Naive thymus-derived CD4-positive, alpha-beta T cell (primary cell): ENCODE measurements at regions of chr2 and their contacts with region 1.

Region 1: DNA sequence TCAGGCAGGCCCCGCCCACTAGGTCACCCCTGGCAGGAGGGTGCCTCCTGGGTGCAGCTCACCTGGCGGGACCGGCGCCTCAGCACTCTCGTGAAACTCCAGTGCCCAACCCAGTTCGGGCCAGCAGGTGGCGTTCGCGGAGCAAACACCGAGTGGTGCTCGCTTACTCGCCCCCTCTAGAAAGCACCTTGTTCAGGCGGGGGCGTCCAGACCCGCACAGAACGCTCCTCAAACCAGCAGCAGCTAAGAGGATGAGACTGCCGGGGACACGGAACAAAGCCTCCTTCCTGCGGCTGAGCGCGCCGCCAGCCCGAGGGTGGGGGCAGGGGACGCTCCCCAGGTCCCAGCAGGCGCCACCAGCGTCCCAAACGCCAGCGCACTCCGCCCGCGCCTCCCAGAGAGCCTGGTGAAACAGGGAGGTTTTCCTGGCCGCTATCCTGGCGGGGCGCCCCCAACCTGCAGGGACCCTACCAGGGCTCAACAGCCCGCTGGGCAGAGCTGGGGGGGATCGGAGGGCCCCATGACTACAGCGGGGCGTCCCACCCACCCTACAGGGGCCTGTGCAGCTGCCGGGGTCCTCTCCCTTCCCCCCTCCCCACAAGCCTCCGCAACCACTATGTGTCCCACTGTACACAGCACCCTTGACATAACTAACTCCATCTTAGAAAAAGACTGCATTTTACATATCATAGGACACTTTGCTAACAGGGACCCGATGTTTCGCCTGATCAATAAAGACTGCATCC is 44.7 kb downstream of the MRPS5 start:
- DNase-seq: peak; percentile 77 to 92 (median 89)
- ATAC-seq: peak; percentile 87
- H3K4me3 ChIP-seq: peak overlapping the region; percentile 90
- H3K4me3 Mint-ChIP-seq: peak overlapping the region; percentile 85 to 97 (median 93)
- H3K27ac ChIP-seq: peak overlapping the region; percentile 80
- H3K27ac Mint-ChIP-seq: peak overlapping the region; percentile 96 to 99 (median 98)
- H3K4me1 ChIP-seq: peaks cover 22 to 73% of the 10 kb centered on the region in 2 donors
- H3K4me1 Mint-ChIP-seq: peaks cover 28 to 83% (median 77%) of the 10 kb centered on the region in 7 donors
- H3K27me3 ChIP-seq: no peaks in the 10 kb centered on the region
- H3K27me3 Mint-ChIP-seq: no peaks in the 10 kb centered on the region

Region 2: DNA sequence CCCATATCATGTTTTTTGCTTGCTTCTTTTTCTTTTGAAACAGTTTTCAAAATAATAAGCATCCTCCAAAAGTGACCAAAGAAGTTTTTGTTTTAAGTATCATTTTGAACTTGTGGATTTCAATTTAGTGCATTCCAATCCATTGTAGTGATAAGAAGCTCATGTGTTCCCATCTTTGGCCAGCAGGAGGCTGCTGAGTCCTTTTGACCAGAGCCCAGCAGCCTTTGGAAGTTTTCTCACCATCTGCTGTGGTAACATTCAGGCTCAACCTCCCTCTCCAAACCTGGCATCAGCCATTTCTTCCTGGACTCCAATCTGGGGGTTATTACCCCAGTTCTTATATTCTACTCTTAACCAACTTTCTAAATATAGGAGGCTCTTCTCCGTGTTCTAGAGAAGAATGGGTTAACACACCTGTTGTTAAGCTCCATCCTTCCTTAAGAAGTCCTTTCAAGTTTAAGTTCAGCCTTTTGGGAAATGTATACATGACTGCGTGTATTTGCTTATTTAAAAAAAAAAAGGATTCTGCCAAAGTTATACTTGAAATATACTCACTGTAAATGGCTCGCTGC is 90.5 kb before region 1 on chr2:
- CTCF ChIA-PET with region 1: interaction called, 3 read pairs
- POLR2A ChIA-PET with region 1: interaction called, 6 read pairs
- intact Hi-C with region 1: loop called (anchors 1 kb)
- DNase-seq: peak in 6 of 9 donors; percentile 20 to 50 (median 28)
- ATAC-seq: no peak
- H3K4me3 ChIP-seq: no peak overlapping the region
- H3K4me3 Mint-ChIP-seq: no peak overlapping the region
- H3K27ac ChIP-seq: no peak overlapping the region
- H3K27ac Mint-ChIP-seq: no peak overlapping the region
- H3K4me1 ChIP-seq: no peaks in the 10 kb centered on the region
- H3K4me1 Mint-ChIP-seq: peaks cover 0 to 6% (median 0%) of the 10 kb centered on the region in 7 donors
- H3K27me3 ChIP-seq: no peaks in the 10 kb centered on the region
- H3K27me3 Mint-ChIP-seq: peaks cover 11 to 26% (median 20%) of the 10 kb centered on the region in 5 donors

Region 3: DNA sequence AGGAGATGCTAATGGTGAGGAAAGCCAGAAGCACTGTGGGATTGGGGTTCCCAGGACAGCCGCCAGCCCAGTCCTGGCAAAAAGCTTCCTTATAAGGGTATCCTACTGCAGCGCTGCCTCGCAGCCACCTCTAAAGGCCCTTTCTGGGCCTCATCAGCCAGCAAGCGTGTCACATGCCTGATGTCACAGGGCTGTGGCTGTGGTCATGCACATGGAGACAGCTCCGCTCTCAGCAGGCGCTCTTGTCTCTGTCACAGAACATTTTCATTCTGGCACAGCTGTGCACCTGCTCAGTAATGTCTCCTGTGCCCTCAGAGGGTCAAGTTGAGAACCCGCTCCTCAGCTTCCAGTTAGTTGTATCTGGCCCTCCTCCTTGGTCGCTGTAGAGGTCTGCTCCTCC is 69.1 kb before region 1 on chr2:
- CTCF ChIA-PET with region 1: no interaction called
- POLR2A ChIA-PET with region 1: no interaction called
- intact Hi-C with region 1: no loop called
- DNase-seq: no peak
- ATAC-seq: no peak
- H3K4me3 ChIP-seq: no peak overlapping the region
- H3K4me3 Mint-ChIP-seq: no peak overlapping the region
- H3K27ac ChIP-seq: no peak overlapping the region
- H3K27ac Mint-ChIP-seq: peak overlapping the region in 1 of 9 donors; percentile 36
- H3K4me1 ChIP-seq: no peaks in the 10 kb centered on the region
- H3K4me1 Mint-ChIP-seq: peaks cover 0 to 4% (median 0%) of the 10 kb centered on the region in 7 donors
- H3K27me3 ChIP-seq: no peaks in the 10 kb centered on the region
- H3K27me3 Mint-ChIP-seq: peaks cover under 1 to 10% (median 6%) of the 10 kb centered on the region in 5 donors

Region 4: GRCh38 chr2:95043300-95044093 is 33.5 kb before region 1 on chr2:
- CTCF ChIA-PET with region 1: interaction called, 12 read pairs
- POLR2A ChIA-PET with region 1: interaction called, 581 read pairs
- intact Hi-C with region 1: loop called in 1 of 2 experiments (anchors 5 kb)
- DNase-seq: peak in 3 of 9 donors; percentile 35 to 45 (median 39)
- ATAC-seq: peak; percentile 37
- H3K4me3 ChIP-seq: no peak overlapping the region
- H3K4me3 Mint-ChIP-seq: peak overlapping the region in 7 of 10 donors; percentile 9 to 68 (median 41)
- H3K27ac ChIP-seq: peak overlapping the region; percentile 49
- H3K27ac Mint-ChIP-seq: peak overlapping the region; percentile 49 to 98 (median 67)
- H3K4me1 ChIP-seq: peaks cover 0 to 62% of the 10 kb centered on the region in 2 donors
- H3K4me1 Mint-ChIP-seq: peaks cover 26 to 99% (median 86%) of the 10 kb centered on the region in 7 donors
- H3K27me3 ChIP-seq: no peaks in the 10 kb centered on the region
- H3K27me3 Mint-ChIP-seq: no peaks in the 10 kb centered on the region

Region 5: GRCh38 chr2:95062242-95063085 is 14.5 kb before region 1 on chr2:
- CTCF ChIA-PET with region 1: interaction called, 163 read pairs
- POLR2A ChIA-PET with region 1: interaction called, 581 read pairs
- intact Hi-C with region 1: loop called (anchors 1 kb)
- DNase-seq: no peak
- ATAC-seq: no peak
- H3K4me3 ChIP-seq: peak overlapping the region; percentile 8
- H3K4me3 Mint-ChIP-seq: peak overlapping the region; percentile 42 to 81 (median 78)
- H3K27ac ChIP-seq: peak overlapping the region; percentile 68
- H3K27ac Mint-ChIP-seq: peak overlapping the region; percentile 84 to 95 (median 90)
- H3K4me1 ChIP-seq: peaks cover 0 to 24% of the 10 kb centered on the region in 2 donors
- H3K4me1 Mint-ChIP-seq: peaks cover 24 to 58% (median 50%) of the 10 kb centered on the region in 7 donors
- H3K27me3 ChIP-seq: no peaks in the 10 kb centered on the region
- H3K27me3 Mint-ChIP-seq: no peaks in the 10 kb centered on the region

Region 6: GRCh38 chr2:95121407-95122196 is 44.6 kb after region 1 on chr2 and contains the start of gene MRPS5:
- CTCF ChIA-PET with region 1: interaction called, 82 read pairs
- POLR2A ChIA-PET with region 1: interaction called, 23 read pairs
- intact Hi-C with region 1: loop called (anchors 1 kb)
- DNase-seq: peak; percentile 63 to 95 (median 72)
- ATAC-seq: peak; percentile 98
- H3K4me3 ChIP-seq: peak within 1 kb of the TSS; percentile 74
- H3K4me3 Mint-ChIP-seq: peak within 1 kb of the TSS; percentile 91 to 99 (median 96)
- H3K27ac ChIP-seq: peak within 1 kb of the TSS; percentile 91
- H3K27ac Mint-ChIP-seq: peak within 1 kb of the TSS; percentile 92 to 97 (median 94)
- H3K4me1 ChIP-seq: peaks cover 19 to 27% of the 10 kb centered on the region in 2 donors
- H3K4me1 Mint-ChIP-seq: peaks cover 38 to 58% (median 52%) of the 10 kb centered on the region in 7 donors
- H3K27me3 ChIP-seq: no peaks in the 10 kb centered on the region
- H3K27me3 Mint-ChIP-seq: no peaks in the 10 kb centered on the region
- total RNA-seq, gene MRPS5: 26.3 to 72.9 (median 60.5) TPM

Region 7: DNA sequence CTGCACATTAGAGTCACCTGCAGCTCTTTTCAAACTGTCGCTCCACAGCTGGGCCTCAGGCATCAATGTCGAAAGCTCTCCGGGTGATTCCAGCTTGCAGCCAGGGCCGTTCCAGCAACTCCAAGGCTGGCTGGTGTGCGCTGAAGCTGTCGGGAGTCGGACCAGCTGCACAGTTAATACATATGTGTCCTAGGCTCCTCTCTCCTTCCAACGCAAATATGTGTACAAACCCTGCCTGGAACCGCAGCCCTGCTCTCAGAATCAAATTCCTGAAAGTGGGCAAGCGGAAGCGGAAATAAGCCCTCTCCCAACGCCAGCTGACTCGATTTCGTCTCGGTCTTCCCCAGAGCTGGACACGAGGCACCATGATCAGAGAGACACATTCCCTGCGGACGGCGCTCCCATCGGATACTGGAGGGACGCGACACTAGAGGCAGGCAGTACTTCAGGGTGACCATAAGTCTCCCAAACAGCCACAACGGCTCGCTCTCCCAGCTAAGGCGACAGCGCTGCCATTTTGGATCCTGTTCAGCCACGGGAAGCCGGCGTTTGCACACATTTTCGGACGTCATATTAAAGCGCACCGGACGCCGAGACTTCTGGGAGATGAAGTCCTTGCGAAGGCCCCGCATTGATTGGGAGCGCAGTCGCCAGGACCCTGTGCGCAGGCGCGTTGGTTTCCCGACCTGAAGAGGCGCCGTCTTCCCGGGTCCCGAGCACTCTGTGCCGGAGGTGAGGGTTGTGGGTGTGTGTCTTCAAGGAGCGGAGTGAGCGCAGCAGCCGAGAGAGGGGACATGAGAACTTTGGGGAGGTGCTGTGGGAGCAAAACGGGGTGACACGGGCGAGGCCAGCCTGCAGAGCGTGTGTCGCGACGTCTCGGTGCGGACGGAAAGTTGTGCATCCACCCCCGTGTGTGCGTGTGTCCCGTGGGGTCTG is 88.4 kb after region 1 on chr2 and contains the start of gene ZNF2:
- CTCF ChIA-PET with region 1: no interaction called
- POLR2A ChIA-PET with region 1: interaction called, 23 read pairs
- intact Hi-C with region 1: loop called (anchors 1 kb)
- DNase-seq: peak; percentile 92 to 98 (median 96)
- ATAC-seq: peak; percentile 97
- H3K4me3 ChIP-seq: peak within 1 kb of the TSS; percentile 91
- H3K4me3 Mint-ChIP-seq: peak within 1 kb of the TSS; percentile 97 to 100 (median 99)
- H3K27ac ChIP-seq: peak within 1 kb of the TSS; percentile 82
- H3K27ac Mint-ChIP-seq: peak within 1 kb of the TSS; percentile 91 to 99 (median 96)
- H3K4me1 ChIP-seq: peaks cover 4 to 13% of the 10 kb centered on the region in 2 donors
- H3K4me1 Mint-ChIP-seq: peaks cover 23 to 54% (median 42%) of the 10 kb centered on the region in 7 donors
- H3K27me3 ChIP-seq: no peaks in the 10 kb centered on the region
- H3K27me3 Mint-ChIP-seq: no peaks in the 10 kb centered on the region
- total RNA-seq, gene ZNF2: 1.5 to 10.2 (median 3.4) TPM

Region 8: GRCh38 chr2:95300450-95300849 is 223.5 kb after region 1 on chr2:
- CTCF ChIA-PET with region 1: no interaction called
- POLR2A ChIA-PET with region 1: no interaction called
- intact Hi-C with region 1: no loop called
- DNase-seq: no peak
- ATAC-seq: no peak
- H3K4me3 ChIP-seq: no peak overlapping the region
- H3K4me3 Mint-ChIP-seq: no peak overlapping the region
- H3K27ac ChIP-seq: no peak overlapping the region
- H3K27ac Mint-ChIP-seq: no peak overlapping the region
- H3K4me1 ChIP-seq: no peaks in the 10 kb centered on the region
- H3K4me1 Mint-ChIP-seq: peaks cover 0 to 8% (median 0%) of the 10 kb centered on the region in 7 donors
- H3K27me3 ChIP-seq: no peaks in the 10 kb centered on the region
- H3K27me3 Mint-ChIP-seq: peaks cover 0 to 18% (median 0%) of the 10 kb centered on the region in 5 donors

Region 9: DNA sequence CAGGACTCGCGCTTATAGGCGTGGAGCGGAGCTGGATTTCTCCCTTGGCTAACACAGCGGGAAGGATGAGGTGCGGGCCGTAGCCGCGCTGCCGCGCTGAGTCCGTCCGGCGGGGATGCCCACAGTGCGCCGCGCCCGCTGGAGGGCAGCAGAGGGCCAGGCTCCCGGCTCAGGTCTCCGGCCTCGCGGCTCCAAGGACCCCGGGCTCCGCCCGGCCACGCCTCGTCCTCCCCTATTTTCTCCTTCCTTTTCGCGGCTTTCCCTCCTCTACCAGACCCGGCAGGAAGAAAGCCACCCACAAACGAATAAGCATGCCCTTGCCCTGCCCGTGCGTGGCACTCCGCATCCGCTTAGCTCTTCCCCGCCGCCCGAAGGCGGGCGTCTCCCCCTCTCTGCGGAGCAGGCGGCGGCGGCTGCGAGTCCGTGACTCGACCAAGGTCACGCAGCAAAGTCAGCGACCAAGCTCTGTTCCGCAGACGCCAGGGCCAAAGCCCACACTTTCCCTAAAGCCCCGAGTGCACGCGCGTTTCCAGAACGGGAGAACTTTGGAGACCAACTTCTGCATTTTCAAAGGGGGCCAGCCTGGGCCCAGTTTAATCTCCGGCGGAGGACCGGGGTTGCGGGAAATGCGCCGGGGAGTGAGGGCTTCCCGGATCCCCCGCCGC is 268.7 kb after region 1 on chr2:
- CTCF ChIA-PET with region 1: no interaction called
- POLR2A ChIA-PET with region 1: no interaction called
- intact Hi-C with region 1: loop called in 1 of 2 experiments (anchors 10 kb)
- DNase-seq: peak in 7 of 9 donors; percentile 19 to 82 (median 37)
- ATAC-seq: peak; percentile 80
- H3K4me3 ChIP-seq: peak overlapping the region; percentile 43
- H3K4me3 Mint-ChIP-seq: peak overlapping the region; percentile 68 to 84 (median 77)
- H3K27ac ChIP-seq: no peak overlapping the region
- H3K27ac Mint-ChIP-seq: no peak overlapping the region
- H3K4me1 ChIP-seq: no peaks in the 10 kb centered on the region
- H3K4me1 Mint-ChIP-seq: peaks cover 0 to 3% (median 0%) of the 10 kb centered on the region in 7 donors
- H3K27me3 ChIP-seq: peaks cover 3 to 9% of the 10 kb centered on the region in 2 donors
- H3K27me3 Mint-ChIP-seq: peaks cover 38 to 57% (median 40%) of the 10 kb centered on the region in 5 donors